Cardiac septum (tissue), 1 donor: ENCODE measurements at regions of chr17 and their contacts with region 1.

Region 1: GRCh38 chr17:17041571-17042380 is 481 bp upstream of the MPRIP start:
- DNase-seq: peak; percentile 99

Region 2: DNA sequence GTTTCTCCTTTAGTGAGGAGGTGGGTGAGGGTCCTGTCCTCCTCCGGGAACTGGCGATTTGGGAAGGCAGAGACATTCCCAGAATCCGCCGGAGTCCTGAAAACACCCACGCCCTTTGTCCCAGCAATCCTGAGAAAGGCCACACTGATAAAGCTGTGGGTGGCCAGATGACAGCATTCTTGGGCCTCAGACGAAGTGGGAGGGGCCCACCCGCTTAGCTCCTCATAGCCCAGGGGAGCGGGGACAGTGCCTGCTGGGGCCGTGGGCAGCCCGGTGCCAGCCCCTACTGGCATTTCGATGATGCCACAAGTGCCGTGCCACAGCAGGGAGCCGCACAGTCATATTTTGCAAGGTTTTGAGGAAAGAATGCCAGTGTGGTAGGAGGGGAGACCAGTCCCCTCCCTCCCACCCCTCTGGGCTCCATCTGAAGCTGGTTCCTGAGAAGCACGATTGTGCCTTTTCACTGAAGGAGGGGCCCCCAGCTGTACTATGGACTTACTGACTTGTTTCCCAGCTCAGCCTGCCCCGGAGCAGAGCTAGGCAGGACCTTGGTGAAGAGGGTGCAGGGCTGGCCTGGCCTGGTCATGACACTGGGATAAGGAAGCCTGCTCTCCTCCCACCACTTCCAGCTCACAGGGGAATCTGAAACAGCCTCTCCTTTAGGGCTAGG is 20.4 kb before region 1 on chr17:
- intact Hi-C with region 1: loop called (anchors 1 kb)
- DNase-seq: no peak

Region 3: GRCh38 chr17:17098426-17099179 is 56.8 kb after region 1 on chr17:
- intact Hi-C with region 1: loop called (anchors 5 kb)
- DNase-seq: no peak

Region 4: DNA sequence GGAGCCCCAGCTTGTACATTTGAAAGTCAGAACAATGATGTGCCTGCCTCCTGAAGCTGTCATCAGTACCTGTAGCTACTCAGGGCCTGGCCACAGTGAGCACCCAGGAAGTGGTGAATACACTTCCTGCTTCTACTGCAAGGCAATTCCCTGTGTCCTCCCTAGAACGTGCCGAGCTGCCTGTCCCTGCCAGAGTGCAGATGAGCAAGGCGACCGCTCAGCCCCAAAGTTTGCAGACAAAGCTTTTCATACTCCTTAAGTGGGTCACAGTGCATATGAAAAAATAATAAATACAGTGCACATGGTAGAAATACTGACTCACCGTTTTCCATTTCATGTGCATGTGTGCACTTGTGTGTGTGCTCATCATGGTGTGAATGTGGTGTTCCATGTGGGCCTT is 77.8 kb after region 1 on chr17:
- intact Hi-C with region 1: loop called (anchors 5 kb)
- DNase-seq: no peak

Region 5: DNA sequence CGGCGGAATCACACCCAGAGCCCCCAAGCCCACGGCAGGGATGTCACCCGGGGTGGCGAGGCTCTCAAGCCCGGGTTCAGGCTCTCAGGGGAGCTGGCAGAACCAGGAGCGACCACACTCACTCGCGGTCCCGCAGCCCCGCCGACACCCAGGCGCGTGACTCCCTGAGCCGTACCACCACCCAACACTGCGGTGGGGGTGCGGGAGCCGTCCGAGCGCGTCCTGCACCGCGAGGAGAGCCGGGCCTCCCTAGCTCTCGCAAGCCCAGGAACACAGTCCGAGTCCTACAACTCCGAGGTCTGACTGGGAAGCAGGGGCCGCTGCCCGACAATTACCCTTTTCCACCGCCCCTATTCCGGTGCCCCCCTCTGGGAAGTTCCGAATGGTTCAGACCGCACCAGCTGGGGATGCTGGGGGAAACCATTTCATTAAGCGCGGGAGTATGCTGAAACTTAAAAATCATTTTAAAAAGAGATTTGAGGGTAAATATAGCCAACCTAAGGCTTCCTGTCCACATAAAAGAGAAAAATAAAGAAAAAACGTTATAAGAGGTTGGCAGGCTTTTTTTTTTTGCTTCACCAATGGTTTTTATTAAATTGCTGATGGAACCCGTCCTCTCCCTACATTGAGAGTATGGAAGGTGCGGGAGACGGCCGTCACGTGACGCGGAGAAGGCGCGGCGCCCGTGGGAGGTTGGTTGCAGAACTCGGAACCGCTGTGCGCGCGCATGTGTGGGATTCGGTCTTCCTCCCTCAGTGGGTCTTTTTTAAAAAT is 195.4 kb after region 1 on chr17 and contains the start of gene FLCN:
- intact Hi-C with region 1: loop called (anchors 2 kb)
- DNase-seq: peak; percentile 97
- total RNA-seq, gene FLCN: 36.1 TPM